ENCODE measurements at regions of chr1 and their contacts with region 1.

Region 1: GRCh38 chr1:226062558-226063223 is at the start of gene H3-3A:
- DNase-seq: peak; percentile 96 to 99 (median 97)
- H3K4me3 ChIP-seq: peak within 1 kb of the TSS; percentile 91
- H3K4me3 Mint-ChIP-seq: peak within 1 kb of the TSS; percentile 99 to 100 (median 100)
- H3K27ac ChIP-seq: peak within 1 kb of the TSS; percentile 96
- H3K27ac Mint-ChIP-seq: peak within 1 kb of the TSS; percentile 95 to 100 (median 98)
- H3K4me1 ChIP-seq: peaks cover 48% of the 10 kb centered on the region
- H3K4me1 Mint-ChIP-seq: peaks cover 48 to 64% (median 50%) of the 10 kb centered on the region in 3 donors
- H3K27me3 ChIP-seq: no peaks in the 10 kb centered on the region
- H3K27me3 Mint-ChIP-seq: no peaks in the 10 kb centered on the region
- total RNA-seq, gene H3-3A: 356 to 372 TPM

Region 2: GRCh38 chr1:225428068-225428880 is 634.4 kb before region 1 on chr1:
- CTCF ChIA-PET with region 1: no interaction called
- POLR2A ChIA-PET with region 1: interaction called, 14 read pairs
- DNase-seq: peak; percentile 88 to 95 (median 89)
- H3K4me3 ChIP-seq: peak overlapping the region; percentile 88
- H3K4me3 Mint-ChIP-seq: peak overlapping the region; percentile 86 to 95 (median 91)
- H3K27ac ChIP-seq: peak overlapping the region; percentile 86
- H3K27ac Mint-ChIP-seq: peak overlapping the region; percentile 87 to 96 (median 93)
- H3K4me1 ChIP-seq: peaks cover 41% of the 10 kb centered on the region
- H3K4me1 Mint-ChIP-seq: peaks cover 42 to 46% (median 46%) of the 10 kb centered on the region in 3 donors
- H3K27me3 ChIP-seq: no peaks in the 10 kb centered on the region
- H3K27me3 Mint-ChIP-seq: no peaks in the 10 kb centered on the region

Region 3: DNA sequence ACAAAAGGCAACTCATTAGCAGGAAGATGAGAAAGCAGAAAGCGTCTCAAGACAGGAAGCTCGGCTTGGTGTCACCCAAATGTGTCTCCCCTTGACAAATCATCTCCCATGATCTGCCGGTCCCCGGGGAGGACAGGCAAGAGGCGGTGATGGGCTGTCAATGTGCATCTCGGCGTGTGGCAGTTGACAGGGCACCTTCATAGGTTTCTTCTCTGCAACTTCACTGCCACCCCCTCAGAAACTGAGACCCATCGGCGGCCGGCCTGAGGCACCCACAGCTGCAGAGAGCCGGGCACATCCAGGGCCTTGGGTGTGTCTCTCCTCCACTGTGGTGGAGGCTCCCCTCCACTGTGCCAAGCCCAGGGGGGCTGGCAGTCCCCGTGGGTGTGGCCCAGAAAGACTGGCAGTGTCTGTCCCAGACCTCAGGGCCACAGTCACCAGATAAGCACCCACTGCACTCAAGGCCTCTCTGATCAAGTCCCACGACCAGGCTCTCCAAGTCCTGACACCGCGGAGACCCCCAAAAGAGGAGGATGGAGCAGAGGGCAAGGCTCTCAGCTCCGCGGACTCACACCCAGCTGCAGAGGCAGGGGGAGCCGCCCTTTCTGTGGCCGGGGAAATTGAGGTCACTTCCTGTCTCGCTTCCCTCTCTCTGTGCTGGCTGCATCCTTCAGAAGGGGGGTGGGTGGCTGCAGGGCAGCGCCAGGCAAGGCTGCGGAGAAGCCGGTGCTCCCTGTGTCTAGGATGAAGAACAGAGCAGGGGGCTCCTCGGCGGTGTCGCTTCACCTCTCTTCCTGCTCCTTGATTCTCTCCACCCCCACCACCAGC is 595.3 kb before region 1 on chr1:
- CTCF ChIA-PET with region 1: no interaction called
- POLR2A ChIA-PET with region 1: interaction called, 21 read pairs
- DNase-seq: peak; percentile 73 to 88 (median 86)
- H3K4me3 ChIP-seq: peak overlapping the region; percentile 84
- H3K4me3 Mint-ChIP-seq: peak overlapping the region; percentile 88 to 96 (median 92)
- H3K27ac ChIP-seq: peak overlapping the region; percentile 90
- H3K27ac Mint-ChIP-seq: peak overlapping the region; percentile 92 to 100 (median 98)
- H3K4me1 ChIP-seq: peaks cover 29% of the 10 kb centered on the region
- H3K4me1 Mint-ChIP-seq: peaks cover 47 to 65% (median 55%) of the 10 kb centered on the region in 3 donors
- H3K27me3 ChIP-seq: no peaks in the 10 kb centered on the region
- H3K27me3 Mint-ChIP-seq: peaks cover 0 to 3% of the 10 kb centered on the region in 2 donors

Region 4: DNA sequence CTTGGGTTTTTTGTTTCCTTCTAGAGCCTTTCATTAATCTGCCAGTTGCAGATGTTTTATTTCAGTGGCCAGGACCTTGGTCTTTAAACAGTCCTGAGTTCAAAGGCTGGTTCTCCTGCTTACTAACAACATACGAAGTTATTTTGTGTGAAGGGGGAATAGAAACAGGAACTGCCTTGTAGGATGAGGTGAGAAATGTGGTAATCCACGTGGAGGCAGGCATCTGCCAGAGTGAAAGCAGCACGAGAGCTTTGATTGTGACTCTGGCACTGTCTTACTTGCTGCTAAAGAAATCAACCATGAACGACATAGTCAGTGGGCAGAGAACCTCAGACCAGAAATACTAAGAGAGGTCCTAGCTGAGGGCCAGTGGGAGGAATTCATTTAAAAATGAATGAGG is 210.9 kb before region 1 on chr1:
- CTCF ChIA-PET with region 1: no interaction called
- POLR2A ChIA-PET with region 1: no interaction called
- DNase-seq: peak in 1 of 5 donors; percentile 42
- H3K4me3 ChIP-seq: no peak overlapping the region
- H3K4me3 Mint-ChIP-seq: peak overlapping the region in 5 of 7 donors; percentile 25 to 80 (median 47)
- H3K27ac ChIP-seq: no peak overlapping the region
- H3K27ac Mint-ChIP-seq: peak overlapping the region; percentile 40 to 94 (median 81)
- H3K4me1 ChIP-seq: peaks cover 55% of the 10 kb centered on the region
- H3K4me1 Mint-ChIP-seq: peaks cover 72 to 89% (median 83%) of the 10 kb centered on the region in 3 donors
- H3K27me3 ChIP-seq: no peaks in the 10 kb centered on the region
- H3K27me3 Mint-ChIP-seq: no peaks in the 10 kb centered on the region

Region 5: GRCh38 chr1:225896937-225897549 is 165.6 kb before region 1 on chr1:
- CTCF ChIA-PET with region 1: no interaction called
- POLR2A ChIA-PET with region 1: interaction called, 13 read pairs
- DNase-seq: peak; percentile 46 to 89 (median 85)
- H3K4me3 ChIP-seq: peak overlapping the region; percentile 48
- H3K4me3 Mint-ChIP-seq: peak overlapping the region; percentile 28 to 84 (median 82)
- H3K27ac ChIP-seq: peak overlapping the region; percentile 45
- H3K27ac Mint-ChIP-seq: peak overlapping the region; percentile 90 to 98 (median 95)
- H3K4me1 ChIP-seq: peaks cover 44% of the 10 kb centered on the region
- H3K4me1 Mint-ChIP-seq: peaks cover 45 to 62% (median 53%) of the 10 kb centered on the region in 3 donors
- H3K27me3 ChIP-seq: no peaks in the 10 kb centered on the region
- H3K27me3 Mint-ChIP-seq: no peaks in the 10 kb centered on the region

Region 6: DNA sequence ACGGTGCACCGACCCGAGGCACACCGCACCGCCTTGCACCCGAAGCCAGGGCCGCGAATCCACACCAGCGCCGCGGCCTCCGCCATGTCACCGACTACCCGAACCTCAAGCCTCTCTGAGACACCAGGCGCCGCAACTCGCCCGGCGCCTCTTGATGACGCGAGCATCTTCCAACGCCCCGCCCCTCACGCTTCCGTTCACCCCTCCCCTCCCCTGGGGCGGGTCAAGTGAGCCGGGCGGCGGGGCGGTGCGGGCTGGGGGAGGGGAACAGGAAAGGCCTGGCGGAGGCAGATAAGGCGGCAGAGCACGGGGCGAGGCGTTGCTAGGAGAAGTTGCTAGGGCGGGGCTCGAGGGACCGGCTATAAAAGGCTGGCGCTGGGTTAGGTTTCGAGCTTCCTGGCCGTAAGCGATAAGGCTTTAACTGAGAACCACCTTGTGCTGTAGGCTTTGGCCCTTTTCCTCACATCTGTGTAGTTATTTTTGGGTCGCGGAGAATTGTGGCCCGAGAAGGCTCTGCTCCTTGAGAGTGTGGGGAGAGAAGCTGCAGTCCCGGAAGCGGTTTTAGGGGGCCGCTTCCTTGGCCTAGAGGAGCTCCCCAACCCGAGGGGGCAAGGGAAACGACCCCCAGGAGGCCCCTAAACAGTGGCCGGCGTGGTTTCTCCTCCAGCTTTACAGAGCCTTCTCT is 63.3 kb before region 1 on chr1 and contains the start of gene SDE2:
- CTCF ChIA-PET with region 1: interaction called, 33 read pairs
- POLR2A ChIA-PET with region 1: interaction called, 171 read pairs
- DNase-seq: peak; percentile 99 to 100 (median 100)
- H3K4me3 ChIP-seq: peak within 1 kb of the TSS; percentile 79
- H3K4me3 Mint-ChIP-seq: peak within 1 kb of the TSS; percentile 98 to 100 (median 100)
- H3K27ac ChIP-seq: peak within 1 kb of the TSS; percentile 99
- H3K27ac Mint-ChIP-seq: peak within 1 kb of the TSS; percentile 96 to 100 (median 100)
- H3K4me1 ChIP-seq: peaks cover 81% of the 10 kb centered on the region
- H3K4me1 Mint-ChIP-seq: peaks cover 55 to 87% (median 81%) of the 10 kb centered on the region in 3 donors
- H3K27me3 ChIP-seq: no peaks in the 10 kb centered on the region
- H3K27me3 Mint-ChIP-seq: peaks cover 0 to 1% of the 10 kb centered on the region in 2 donors
- total RNA-seq, gene SDE2: 23.4 to 23.6 TPM

Region 7: DNA sequence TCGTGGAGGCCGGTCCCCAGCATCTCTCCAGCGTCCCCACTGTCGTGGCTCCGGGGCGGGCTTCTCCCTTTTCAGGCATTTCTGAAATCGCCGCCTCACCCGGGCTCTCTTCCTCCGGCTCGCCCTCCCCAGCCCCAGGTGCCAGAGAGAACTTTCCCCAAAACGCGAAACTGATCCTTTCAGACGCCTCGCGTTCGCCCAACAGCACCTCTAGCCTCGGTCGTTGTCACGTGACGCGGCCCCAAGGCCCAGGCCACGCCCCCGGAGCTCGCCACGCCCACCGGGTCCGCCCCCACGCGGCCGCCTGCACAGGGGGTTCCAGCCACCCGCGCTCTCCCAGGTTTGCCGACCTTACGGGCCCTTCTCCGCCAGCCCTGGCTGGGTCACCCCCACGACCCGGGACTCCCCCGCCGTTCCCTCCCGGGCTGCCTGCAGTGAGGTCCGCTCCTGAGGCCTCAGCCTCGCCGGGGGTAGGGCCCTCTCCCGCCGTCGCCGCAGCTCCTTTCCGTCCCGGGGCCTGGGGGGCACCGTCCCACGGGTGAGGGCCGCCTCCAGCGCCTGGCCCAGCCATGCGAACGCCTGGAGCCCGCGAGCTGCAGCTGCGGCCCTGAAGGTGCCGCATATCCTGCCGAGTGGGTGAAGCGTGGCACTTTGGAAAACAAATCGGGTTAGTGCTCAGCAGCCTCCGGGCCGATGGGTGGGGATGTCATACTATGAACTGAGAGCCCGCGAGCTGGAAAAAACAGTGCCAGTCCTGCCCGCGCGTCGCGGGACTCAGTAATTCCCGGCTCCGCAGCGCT is 20.8 kb after region 1 on chr1:
- CTCF ChIA-PET with region 1: interaction called, 26 read pairs
- POLR2A ChIA-PET with region 1: interaction called, 30 read pairs
- DNase-seq: peak; percentile 84 to 93 (median 92)
- H3K4me3 ChIP-seq: peak overlapping the region; percentile 68
- H3K4me3 Mint-ChIP-seq: peak overlapping the region; percentile 80 to 95 (median 89)
- H3K27ac ChIP-seq: no peak overlapping the region
- H3K27ac Mint-ChIP-seq: peak overlapping the region in 5 of 8 donors; percentile 20 to 91 (median 40)
- H3K4me1 ChIP-seq: peaks cover 9% of the 10 kb centered on the region
- H3K4me1 Mint-ChIP-seq: peaks cover 7 to 12% (median 10%) of the 10 kb centered on the region in 3 donors
- H3K27me3 ChIP-seq: no peaks in the 10 kb centered on the region
- H3K27me3 Mint-ChIP-seq: no peaks in the 10 kb centered on the region

Region 8: GRCh38 chr1:226121587-226122400 is 59.1 kb after region 1 on chr1:
- CTCF ChIA-PET with region 1: interaction called, 39 read pairs
- POLR2A ChIA-PET with region 1: interaction called, 9 read pairs
- DNase-seq: peak; percentile 70 to 85 (median 79)
- H3K4me3 ChIP-seq: peak overlapping the region; percentile 58
- H3K4me3 Mint-ChIP-seq: peak overlapping the region; percentile 65 to 94 (median 88)
- H3K27ac ChIP-seq: peak overlapping the region; percentile 54
- H3K27ac Mint-ChIP-seq: peak overlapping the region in 5 of 8 donors; percentile 73 to 98 (median 93)
- H3K4me1 ChIP-seq: peaks cover 25% of the 10 kb centered on the region
- H3K4me1 Mint-ChIP-seq: peaks cover 18 to 36% (median 26%) of the 10 kb centered on the region in 3 donors
- H3K27me3 ChIP-seq: no peaks in the 10 kb centered on the region
- H3K27me3 Mint-ChIP-seq: peaks cover 2 to 4% of the 10 kb centered on the region in 2 donors

Region 9: GRCh38 chr1:226148121-226148648 is 85.5 kb after region 1 on chr1:
- CTCF ChIA-PET with region 1: no interaction called
- POLR2A ChIA-PET with region 1: no interaction called
- DNase-seq: no peak
- H3K4me3 ChIP-seq: no peak overlapping the region
- H3K4me3 Mint-ChIP-seq: no peak overlapping the region
- H3K27ac ChIP-seq: no peak overlapping the region
- H3K27ac Mint-ChIP-seq: peak overlapping the region in 2 of 8 donors; percentile 64 to 72
- H3K4me1 ChIP-seq: no peaks in the 10 kb centered on the region
- H3K4me1 Mint-ChIP-seq: no peaks in the 10 kb centered on the region
- H3K27me3 ChIP-seq: no peaks in the 10 kb centered on the region
- H3K27me3 Mint-ChIP-seq: no peaks in the 10 kb centered on the region

Region 10: DNA sequence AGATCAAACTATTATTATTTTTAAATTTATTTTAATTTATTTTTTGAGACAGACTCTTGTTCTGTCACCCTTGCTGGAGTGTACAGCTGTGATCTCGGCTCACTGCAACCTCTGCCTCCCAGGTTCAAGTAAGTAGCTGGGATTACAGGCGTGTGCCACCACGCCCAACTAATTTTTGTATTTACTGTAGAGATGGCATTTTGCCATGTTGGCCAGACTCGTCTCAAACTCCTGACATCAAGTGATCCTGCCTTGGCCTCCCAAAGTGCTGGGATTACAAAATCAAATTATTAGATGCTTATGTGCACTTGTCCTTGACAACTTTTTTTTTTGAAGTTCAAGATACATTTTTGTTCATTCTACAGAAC is 230.8 kb after region 1 on chr1:
- CTCF ChIA-PET with region 1: no interaction called
- POLR2A ChIA-PET with region 1: no interaction called
- DNase-seq: no peak
- H3K4me3 ChIP-seq: no peak overlapping the region
- H3K4me3 Mint-ChIP-seq: no peak overlapping the region
- H3K27ac ChIP-seq: no peak overlapping the region
- H3K27ac Mint-ChIP-seq: no peak overlapping the region
- H3K4me1 ChIP-seq: no peaks in the 10 kb centered on the region
- H3K4me1 Mint-ChIP-seq: no peaks in the 10 kb centered on the region
- H3K27me3 ChIP-seq: no peaks in the 10 kb centered on the region
- H3K27me3 Mint-ChIP-seq: no peaks in the 10 kb centered on the region